HepG2 (cell line): ENCODE measurements at regions of chr11 and their contacts with region 1.

Region 1: GRCh38 chr11:12388173-12388572 is 10.8 kb downstream of the PARVA start:
- DNase-seq: no peak
- ATAC-seq: no peak
- H3K4me3 ChIP-seq: no peak overlapping the region
- H3K27ac ChIP-seq: no peak overlapping the region
- H3K4me1 ChIP-seq: peaks cover 47% of the 10 kb centered on the region
- H3K27me3 ChIP-seq: no peaks in the 10 kb centered on the region
- CTCF ChIP-seq: no peak
- EP300 ChIP-seq: no peak
- POLR2A ChIP-seq: no peak
- RAD21 ChIP-seq: no peak

Region 2: GRCh38 chr11:11555208-11555607 is 833.0 kb before region 1 on chr11:
- CTCF ChIA-PET with region 1: no interaction called
- POLR2A ChIA-PET with region 1: no interaction called
- in situ Hi-C with region 1: no loop called
- intact Hi-C with region 1: no loop called
- DNase-seq: no peak
- ATAC-seq: no peak
- H3K4me3 ChIP-seq: no peak overlapping the region
- H3K27ac ChIP-seq: no peak overlapping the region
- H3K4me1 ChIP-seq: no peaks in the 10 kb centered on the region
- H3K27me3 ChIP-seq: peaks cover 5 to 14% of the 10 kb centered on the region in 2 experiments
- CTCF ChIP-seq: no peak
- EP300 ChIP-seq: no peak
- POLR2A ChIP-seq: no peak
- RAD21 ChIP-seq: no peak

Region 3: DNA sequence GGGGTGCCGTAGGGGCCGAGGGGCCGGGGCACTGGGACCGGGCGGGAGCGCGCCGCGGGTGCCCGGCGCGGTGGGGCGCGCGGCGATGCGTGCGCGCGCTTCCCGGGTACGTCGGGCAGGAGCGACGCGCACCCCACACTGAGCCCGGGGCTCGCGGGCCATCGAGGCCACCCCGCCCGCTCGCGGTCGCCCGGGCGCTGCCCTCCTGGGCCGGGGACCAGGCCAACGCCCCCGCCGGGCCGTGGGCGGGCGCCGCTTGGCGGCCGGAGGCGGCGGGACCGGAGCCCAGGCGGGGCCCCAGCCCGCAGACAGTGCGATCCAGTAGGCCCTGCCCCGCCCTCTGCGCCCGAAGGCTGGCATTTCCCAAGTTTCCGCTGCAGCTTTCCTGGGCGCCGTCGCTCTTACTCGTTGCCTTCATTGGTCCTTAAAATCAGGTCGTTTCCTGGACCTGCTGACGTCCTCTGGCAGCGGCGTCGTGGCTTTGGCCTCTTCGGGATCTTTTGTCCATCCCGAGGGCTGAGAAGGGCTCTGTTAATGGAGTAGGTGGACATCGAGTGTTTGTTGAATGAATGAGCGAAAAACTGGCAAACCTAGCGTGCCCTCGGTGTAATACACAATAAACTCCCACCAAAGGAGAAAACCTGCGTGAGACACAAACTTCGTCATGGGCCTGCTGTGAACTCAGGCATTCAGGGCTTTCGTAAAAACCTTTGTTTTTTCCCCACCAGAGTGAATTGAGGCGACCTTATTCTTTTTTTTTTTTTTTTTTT is 10.2 kb before region 1 on chr11:
- CTCF ChIA-PET with region 1: no interaction called
- POLR2A ChIA-PET with region 1: interaction called, 20 read pairs
- in situ Hi-C with region 1: no loop called
- intact Hi-C with region 1: no loop called
- DNase-seq: peak; percentile 62
- ATAC-seq: peak; percentile 91
- H3K4me3 ChIP-seq: peak overlapping the region; percentile 80 to 91 (median 86)
- H3K27ac ChIP-seq: peak overlapping the region; percentile 63
- H3K4me1 ChIP-seq: peaks cover 27% of the 10 kb centered on the region
- H3K27me3 ChIP-seq: peaks cover 0 to 4% of the 10 kb centered on the region in 2 experiments; a peak in 1 of 5 replicates
- CTCF ChIP-seq: peak; percentile 32
- EP300 ChIP-seq: no peak
- POLR2A ChIP-seq: peak; percentile 30 to 35; a peak in 1 of 4 replicates
- RAD21 ChIP-seq: peak; percentile 59; the same call in 1 of the 2 replicates

Region 4: GRCh38 chr11:12404436-12404835 is 16.3 kb after region 1 on chr11:
- CTCF ChIA-PET with region 1: no interaction called
- POLR2A ChIA-PET with region 1: no interaction called
- in situ Hi-C with region 1: no loop called
- intact Hi-C with region 1: no loop called
- DNase-seq: no peak
- ATAC-seq: no peak
- H3K4me3 ChIP-seq: no peak overlapping the region
- H3K27ac ChIP-seq: no peak overlapping the region
- H3K4me1 ChIP-seq: peaks cover 14% of the 10 kb centered on the region
- H3K27me3 ChIP-seq: no peaks in the 10 kb centered on the region
- CTCF ChIP-seq: no peak
- EP300 ChIP-seq: no peak
- POLR2A ChIP-seq: no peak
- RAD21 ChIP-seq: no peak